ENCODE measurements at regions of chr10 and their contacts with region 1.

Region 1: DNA sequence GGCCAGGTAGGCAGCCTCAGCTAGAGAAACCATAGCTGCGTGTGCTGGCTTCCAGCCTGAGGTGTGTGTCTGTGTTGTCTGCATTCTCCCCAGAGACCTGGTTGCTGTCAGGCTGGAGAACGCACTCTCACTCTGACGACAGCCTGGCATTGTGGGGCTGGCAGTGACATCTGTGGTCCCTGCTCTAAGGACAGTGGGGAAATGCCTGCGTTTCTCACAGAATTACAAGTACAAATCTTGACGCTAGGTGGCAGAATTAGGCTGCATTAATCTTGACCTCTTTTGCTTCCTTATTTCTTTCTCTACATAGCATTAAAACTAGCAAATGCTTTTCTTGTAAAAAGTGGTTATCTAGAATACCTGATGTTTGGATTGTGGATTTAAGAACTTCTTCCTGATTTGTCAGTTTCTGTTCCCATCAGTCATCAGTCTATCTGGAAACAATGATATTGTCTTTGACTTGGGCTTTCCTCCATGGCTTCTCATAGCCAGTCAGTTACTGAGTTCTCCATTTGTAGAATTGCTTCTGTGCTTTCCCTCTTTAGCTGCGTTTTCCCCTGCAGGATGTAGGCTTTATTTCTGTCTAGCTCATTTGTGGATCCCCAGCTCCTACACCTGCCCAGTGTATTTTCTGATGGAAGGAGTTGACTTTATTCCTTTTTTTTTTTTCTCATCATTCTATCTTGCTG is 86.0 kb downstream of the FANK1 start:
- DNase-seq: peak; percentile 43
- H3K4me3 ChIP-seq: no peak overlapping the region
- H3K27ac ChIP-seq: no peak overlapping the region
- H3K4me1 ChIP-seq: no peaks in the 10 kb centered on the region
- H3K27me3 ChIP-seq: no peaks in the 10 kb centered on the region
- CTCF ChIP-seq: peak; percentile 27 to 82 (median 65)
- POLR2A ChIP-seq: no peak

Region 2: DNA sequence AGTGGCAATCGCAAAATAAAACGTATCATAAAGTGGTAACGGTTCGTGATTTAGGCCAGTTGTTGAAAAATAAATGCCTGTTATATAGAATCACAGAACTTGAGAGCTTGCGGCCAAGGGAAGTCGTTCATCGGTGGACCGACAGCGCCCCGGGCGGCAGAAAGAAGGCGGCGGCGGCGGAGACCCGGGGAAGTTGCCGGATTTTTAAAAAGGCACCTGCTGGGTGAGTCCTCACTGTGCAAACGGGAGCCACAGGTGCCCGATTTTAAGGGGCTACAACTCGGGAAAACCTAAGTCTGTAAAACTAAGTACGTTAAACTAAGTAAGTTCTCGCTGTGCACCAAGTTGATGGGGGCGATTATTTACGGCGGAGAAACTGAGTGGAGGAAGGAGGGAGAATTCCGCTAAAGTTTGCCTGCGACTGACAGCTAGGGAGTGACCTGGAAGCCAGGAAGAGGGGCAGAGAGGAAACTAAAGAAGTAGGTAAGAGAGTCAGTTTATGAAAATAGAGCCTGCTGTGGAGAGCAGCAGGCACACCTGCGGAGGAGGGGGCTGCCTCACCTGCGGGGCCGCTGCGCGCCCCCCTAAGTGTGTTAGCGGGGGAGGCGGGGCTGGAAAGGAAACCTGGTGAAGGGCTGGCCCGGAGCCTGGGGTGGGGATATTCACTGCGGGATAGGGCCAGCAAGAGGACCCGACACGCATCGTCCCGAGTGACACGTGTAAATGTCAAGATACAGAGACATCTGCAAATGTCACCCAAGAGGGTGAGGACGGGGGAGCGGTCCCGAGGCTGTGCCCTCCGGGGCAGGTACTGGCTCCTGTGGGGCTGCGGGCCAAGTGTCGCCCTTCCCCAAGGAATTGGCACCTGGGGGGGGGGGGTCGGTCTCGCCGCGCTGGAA is 404.9 kb after region 1 on chr10:
- intact Hi-C with region 1: loop called (anchors 5 kb)
- DNase-seq: peak; percentile 58
- H3K4me3 ChIP-seq: peak overlapping the region; percentile 33 to 41
- H3K27ac ChIP-seq: no peak overlapping the region
- H3K4me1 ChIP-seq: no peaks in the 10 kb centered on the region
- H3K27me3 ChIP-seq: no peaks in the 10 kb centered on the region
- CTCF ChIP-seq: peak; percentile 33 to 77 (median 64)
- POLR2A ChIP-seq: no peak

Region 3: DNA sequence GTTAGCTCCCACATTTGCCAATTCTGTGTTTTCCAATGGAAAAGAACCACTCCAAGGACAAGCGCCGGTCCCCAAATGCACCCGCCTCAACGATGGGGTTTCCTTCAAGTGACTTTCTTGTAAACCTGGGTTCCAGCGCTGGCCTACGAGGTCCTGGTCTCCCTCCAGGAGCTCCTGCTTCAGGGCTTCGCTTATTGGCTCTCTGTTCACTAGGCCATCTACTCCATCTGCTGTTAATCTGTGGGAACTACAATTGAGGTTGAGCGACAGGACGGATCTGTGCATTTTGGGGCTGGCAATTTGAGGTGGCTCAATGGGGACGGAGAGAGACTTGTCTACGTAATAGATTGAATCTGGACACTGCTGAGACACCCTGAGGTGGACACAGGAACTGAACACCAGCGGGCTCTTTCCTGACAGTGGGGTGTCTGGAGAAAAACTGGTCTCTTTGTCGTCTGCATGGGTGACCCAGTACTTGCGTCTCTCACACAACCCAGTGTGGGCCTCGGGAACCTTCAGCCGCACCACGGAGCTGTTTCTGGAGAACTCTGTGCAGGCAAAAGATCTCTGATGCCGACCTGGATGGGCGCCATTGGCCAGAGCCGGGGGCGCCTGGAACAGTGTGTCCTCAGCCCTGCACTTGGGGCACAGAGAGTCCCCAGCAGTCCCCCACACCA is 521.8 kb after region 1 on chr10:
- intact Hi-C with region 1: loop called (anchors 5 kb)
- DNase-seq: peak; percentile 29
- H3K4me3 ChIP-seq: no peak overlapping the region
- H3K27ac ChIP-seq: no peak overlapping the region
- H3K4me1 ChIP-seq: no peaks in the 10 kb centered on the region
- H3K27me3 ChIP-seq: no peaks in the 10 kb centered on the region
- CTCF ChIP-seq: peak; percentile 46 to 73 (median 60)
- POLR2A ChIP-seq: no peak

Region 4: GRCh38 chr10:127853868-127854768 is 1871.7 kb after region 1 on chr10:
- intact Hi-C with region 1: loop called (anchors 5 kb)
- DNase-seq: peak; percentile 43
- H3K4me3 ChIP-seq: no peak overlapping the region
- H3K27ac ChIP-seq: no peak overlapping the region
- H3K4me1 ChIP-seq: no peaks in the 10 kb centered on the region
- H3K27me3 ChIP-seq: peaks cover 3% of the 10 kb centered on the region
- CTCF ChIP-seq: peak; percentile 22 to 86 (median 76)
- POLR2A ChIP-seq: no peak